MCF 10A (cell line): ENCODE measurements at regions of chr5 and their contacts with region 1.

Region 1: DNA sequence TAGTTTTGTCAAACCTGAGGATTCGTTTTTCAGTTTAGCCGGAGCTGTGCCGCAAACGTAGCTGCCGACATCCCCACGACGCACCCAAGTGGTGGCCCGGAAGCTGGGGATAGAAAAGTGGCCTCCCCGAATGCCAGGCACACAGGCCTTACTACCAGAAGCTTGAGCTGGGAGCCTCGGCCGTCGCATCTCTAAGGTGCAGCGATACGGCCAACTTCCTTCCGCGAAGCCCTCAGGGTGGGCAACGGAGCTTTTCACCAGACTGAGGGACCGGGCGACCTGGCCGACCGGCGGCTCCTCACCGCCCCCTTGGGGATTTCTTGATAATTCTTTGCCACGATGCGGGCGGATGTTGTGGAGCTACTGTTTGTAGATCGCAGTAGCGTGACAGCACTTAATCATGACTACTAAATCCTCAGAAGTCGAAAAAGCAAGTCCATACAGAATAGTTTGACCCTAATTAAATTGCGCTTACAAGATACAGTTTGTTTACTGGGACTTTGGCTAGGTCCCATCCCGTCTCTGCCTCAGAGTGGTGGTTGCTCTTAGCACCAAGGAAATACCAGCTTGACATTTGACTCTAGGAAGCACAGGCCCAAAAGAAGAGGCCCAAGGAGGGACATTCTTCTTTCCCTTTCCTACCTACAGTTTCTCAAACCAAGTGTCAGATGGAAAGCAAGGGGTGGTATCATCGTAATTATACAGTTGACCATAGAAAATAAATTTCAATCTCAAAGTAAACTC is 613 bp upstream of the TMEM267 start:
- DNase-seq: peak; percentile 85
- H3K4me3 Mint-ChIP-seq: peak overlapping the region; percentile 77
- H3K27ac Mint-ChIP-seq: peak overlapping the region; percentile 94
- H3K4me1 Mint-ChIP-seq: peaks cover 11% of the 10 kb centered on the region
- H3K27me3 Mint-ChIP-seq: no peaks in the 10 kb centered on the region
- CTCF ChIP-seq: peak; percentile 74

Region 2: DNA sequence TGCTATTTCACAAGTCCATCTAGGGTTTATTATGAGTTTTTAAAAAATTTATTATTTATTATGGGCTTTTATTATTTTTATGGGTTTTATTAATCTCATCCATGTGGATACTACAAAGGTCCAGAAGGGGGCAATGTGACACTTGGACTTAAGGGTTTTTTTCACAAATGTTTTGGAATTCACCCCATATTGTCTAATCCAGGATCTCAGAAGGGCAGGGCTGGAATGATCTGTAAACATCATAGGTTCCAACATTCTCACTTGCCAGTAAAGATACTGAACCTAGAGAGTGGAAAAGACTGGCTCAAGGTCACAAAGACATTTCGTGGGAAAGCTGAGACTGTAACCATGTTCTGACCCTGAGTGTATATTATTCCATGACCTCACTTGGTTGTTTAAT is 256.6 kb before region 1 on chr5:
- CTCF ChIA-PET with region 1: interaction called, 4 read pairs
- POLR2A ChIA-PET with region 1: no interaction called
- intact Hi-C with region 1: loop called (anchors 2 kb)
- DNase-seq: peak; percentile 67
- H3K4me3 Mint-ChIP-seq: no peak overlapping the region
- H3K27ac Mint-ChIP-seq: no peak overlapping the region
- H3K4me1 Mint-ChIP-seq: peaks cover 4% of the 10 kb centered on the region
- H3K27me3 Mint-ChIP-seq: no peaks in the 10 kb centered on the region
- CTCF ChIP-seq: peak; percentile 51

Region 3: GRCh38 chr5:43396762-43397304 is 87.4 kb before region 1 on chr5:
- CTCF ChIA-PET with region 1: interaction called, 142 read pairs
- POLR2A ChIA-PET with region 1: interaction called, 78 read pairs
- intact Hi-C with region 1: loop called (anchors 1 kb)
- DNase-seq: peak; percentile 49
- H3K4me3 Mint-ChIP-seq: peak overlapping the region; percentile 82
- H3K27ac Mint-ChIP-seq: peak overlapping the region; percentile 68
- H3K4me1 Mint-ChIP-seq: peaks cover 11% of the 10 kb centered on the region
- H3K27me3 Mint-ChIP-seq: no peaks in the 10 kb centered on the region
- CTCF ChIP-seq: no peak

Region 4: DNA sequence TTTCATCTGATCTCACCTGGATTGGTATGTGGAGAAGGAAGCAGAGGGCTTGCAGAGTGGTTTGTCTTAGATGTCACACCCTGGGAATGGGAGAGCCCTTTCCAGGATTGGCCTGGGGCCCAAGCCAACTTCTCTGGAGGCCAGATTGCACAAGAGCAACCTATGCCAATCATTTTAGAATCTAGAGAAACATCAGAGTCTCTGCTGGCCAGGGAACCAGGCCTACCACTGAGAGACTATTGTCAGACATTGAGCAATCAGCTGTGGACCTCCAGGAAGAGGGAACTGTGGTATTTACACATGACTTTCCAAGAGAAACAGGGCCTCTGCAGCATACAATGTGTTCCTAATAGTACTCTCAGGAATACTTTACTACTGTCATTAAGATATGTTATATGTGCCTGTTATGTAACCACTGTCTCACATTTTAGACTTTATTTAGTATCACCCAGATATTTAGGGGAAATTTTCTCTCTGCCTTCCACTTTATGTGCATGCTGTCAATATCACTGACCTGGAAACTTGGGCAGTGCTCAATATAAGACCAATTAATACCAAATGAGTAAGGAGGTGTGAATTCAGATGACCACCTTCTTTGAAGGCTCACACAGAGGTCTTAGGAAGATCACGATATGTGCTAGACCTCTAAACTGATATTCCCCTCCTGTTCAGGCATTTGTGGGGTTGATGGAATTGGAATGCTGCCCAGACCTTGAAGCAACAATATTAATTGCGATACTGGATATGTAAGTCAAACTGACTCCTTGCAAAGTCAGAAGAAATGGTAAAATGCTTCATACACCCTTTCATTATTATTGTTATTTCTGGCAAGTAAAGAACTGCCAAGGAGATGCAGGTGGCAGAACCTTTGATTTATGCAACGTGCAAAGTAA is 51.6 kb before region 1 on chr5:
- CTCF ChIA-PET with region 1: interaction called, 26 read pairs
- POLR2A ChIA-PET with region 1: interaction called, 113 read pairs
- intact Hi-C with region 1: loop called (anchors 2 kb)
- DNase-seq: peak; percentile 99
- H3K4me3 Mint-ChIP-seq: peak overlapping the region; percentile 28
- H3K27ac Mint-ChIP-seq: peak overlapping the region; percentile 53
- H3K4me1 Mint-ChIP-seq: peaks cover 43% of the 10 kb centered on the region
- H3K27me3 Mint-ChIP-seq: no peaks in the 10 kb centered on the region
- CTCF ChIP-seq: no peak

Region 5: DNA sequence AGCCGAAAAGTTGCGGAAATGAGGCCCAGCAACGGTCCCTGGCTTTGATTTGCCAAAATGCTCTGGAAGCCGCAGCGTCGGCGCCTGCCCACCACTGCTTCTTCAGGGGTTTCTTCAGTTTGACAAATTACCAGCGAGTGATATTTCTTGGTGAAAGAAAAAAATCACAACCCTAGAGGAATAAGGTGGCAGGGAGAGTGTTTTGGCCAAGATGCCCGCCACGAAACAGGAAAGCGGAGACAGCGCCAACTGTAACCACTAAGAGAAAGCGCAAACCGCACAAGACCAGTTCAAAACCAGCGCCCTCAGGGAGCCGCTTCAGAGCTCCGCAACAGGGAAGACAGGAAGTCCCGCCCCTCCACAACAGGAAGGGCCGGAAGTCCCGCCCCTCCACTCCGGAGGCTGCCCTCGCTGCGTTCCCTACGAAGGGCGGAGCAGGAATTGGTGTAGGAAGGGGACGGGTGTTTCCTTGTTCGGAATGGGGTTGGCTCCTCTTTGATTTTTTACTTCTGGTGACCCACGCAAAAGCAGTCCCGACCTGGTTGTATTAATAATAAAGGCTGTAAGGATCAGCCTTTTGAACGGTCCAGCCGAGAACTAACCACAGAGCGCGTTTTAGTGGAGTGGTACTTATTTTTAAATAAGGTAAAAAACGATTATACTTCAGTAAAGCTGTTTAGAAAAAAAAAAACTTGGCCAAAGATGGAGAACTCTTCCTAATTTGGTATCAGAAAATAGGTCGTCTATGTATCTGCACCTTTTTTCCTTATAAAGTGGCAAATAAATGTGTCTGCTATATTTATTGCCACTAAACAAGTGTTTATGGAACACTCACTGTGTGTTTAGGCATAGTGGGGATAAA is 30.8 kb after region 1 on chr5 and contains the start of gene C5orf34:
- CTCF ChIA-PET with region 1: no interaction called
- POLR2A ChIA-PET with region 1: interaction called, 51 read pairs
- intact Hi-C with region 1: no loop called
- DNase-seq: peak; percentile 97
- H3K4me3 Mint-ChIP-seq: peak within 1 kb of the TSS; percentile 80
- H3K27ac Mint-ChIP-seq: peak within 1 kb of the TSS; percentile 90
- H3K4me1 Mint-ChIP-seq: peaks cover 21% of the 10 kb centered on the region
- H3K27me3 Mint-ChIP-seq: no peaks in the 10 kb centered on the region
- CTCF ChIP-seq: no peak
- total RNA-seq, gene C5orf34: 3.9 and 5.9 TPM in 2 replicates

Region 6: DNA sequence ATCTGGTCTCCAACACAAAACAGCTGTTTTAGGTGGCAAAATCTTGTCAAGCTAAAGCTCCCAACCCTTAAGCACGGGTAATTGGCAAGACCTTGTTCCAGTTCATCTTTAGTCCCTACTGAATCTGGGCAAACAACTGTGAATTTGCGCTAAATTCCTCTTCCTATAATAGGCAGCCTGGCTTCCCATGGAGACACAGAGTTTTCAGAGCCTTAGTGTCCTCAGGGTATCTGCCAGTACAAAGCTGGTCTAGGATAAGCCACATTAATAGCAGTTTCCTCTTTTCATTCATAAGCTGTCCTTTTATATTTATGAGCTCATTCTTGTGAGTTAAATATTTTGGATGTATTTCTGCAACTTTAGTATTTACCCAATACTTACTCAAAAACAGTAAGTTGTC is 845.4 kb after region 1 on chr5:
- CTCF ChIA-PET with region 1: no interaction called
- POLR2A ChIA-PET with region 1: no interaction called
- intact Hi-C with region 1: no loop called
- DNase-seq: no peak
- H3K4me3 Mint-ChIP-seq: no peak overlapping the region
- H3K27ac Mint-ChIP-seq: no peak overlapping the region
- H3K4me1 Mint-ChIP-seq: no peaks in the 10 kb centered on the region
- H3K27me3 Mint-ChIP-seq: no peaks in the 10 kb centered on the region
- CTCF ChIP-seq: no peak